ENCODE measurements at regions of chr1 and their contacts with region 1.

Region 1: GRCh38 chr1:179706339-179706941 is 36.7 kb upstream of the FAM163A start:
- DNase-seq: peak; percentile 68
- ATAC-seq: no peak
- H3K4me3 Mint-ChIP-seq: no peak overlapping the region
- H3K27ac Mint-ChIP-seq: no peak overlapping the region
- H3K4me1 Mint-ChIP-seq: peaks cover 6% of the 10 kb centered on the region
- H3K27me3 Mint-ChIP-seq: no peaks in the 10 kb centered on the region
- CTCF ChIP-seq: peak; percentile 80

Region 2: GRCh38 chr1:179719272-179719671 is 12.8 kb after region 1 on chr1:
- CTCF ChIA-PET with region 1: interaction called, 30 read pairs
- POLR2A ChIA-PET with region 1: no interaction called
- intact Hi-C with region 1: no loop called
- DNase-seq: no peak
- ATAC-seq: no peak
- H3K4me3 Mint-ChIP-seq: no peak overlapping the region
- H3K27ac Mint-ChIP-seq: no peak overlapping the region
- H3K4me1 Mint-ChIP-seq: no peaks in the 10 kb centered on the region
- H3K27me3 Mint-ChIP-seq: no peaks in the 10 kb centered on the region
- CTCF ChIP-seq: no peak

Region 3: DNA sequence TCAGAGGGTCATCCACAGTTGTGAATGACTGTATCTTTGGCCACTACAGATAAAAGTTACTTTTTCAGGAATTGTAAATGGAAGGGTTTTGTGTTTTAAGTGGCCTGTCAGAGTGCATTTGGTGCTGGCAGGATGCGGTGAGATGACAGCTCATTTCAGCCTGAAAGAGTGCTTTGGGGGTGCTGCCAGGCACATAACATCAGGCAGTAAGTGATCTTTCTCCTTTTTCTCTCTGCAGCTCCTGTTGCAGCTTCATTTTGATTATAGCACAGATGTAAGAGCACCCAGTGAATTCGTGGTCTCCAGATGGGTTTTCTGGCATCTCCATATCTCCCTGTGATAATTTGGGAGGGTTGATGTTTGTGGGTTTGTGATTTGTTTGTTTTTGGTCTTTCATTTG is 21.8 kb after region 1 on chr1:
- CTCF ChIA-PET with region 1: interaction called, 30 read pairs
- POLR2A ChIA-PET with region 1: no interaction called
- intact Hi-C with region 1: no loop called
- DNase-seq: no peak
- ATAC-seq: no peak
- H3K4me3 Mint-ChIP-seq: no peak overlapping the region
- H3K27ac Mint-ChIP-seq: no peak overlapping the region
- H3K4me1 Mint-ChIP-seq: no peaks in the 10 kb centered on the region
- H3K27me3 Mint-ChIP-seq: peaks cover 9% of the 10 kb centered on the region
- CTCF ChIP-seq: no peak

Region 4: GRCh38 chr1:179761296-179761695 is 54.9 kb after region 1 on chr1:
- CTCF ChIA-PET with region 1: interaction called, 17 read pairs
- POLR2A ChIA-PET with region 1: no interaction called
- intact Hi-C with region 1: no loop called
- DNase-seq: no peak
- ATAC-seq: no peak
- H3K4me3 Mint-ChIP-seq: no peak overlapping the region
- H3K27ac Mint-ChIP-seq: no peak overlapping the region
- H3K4me1 Mint-ChIP-seq: no peaks in the 10 kb centered on the region
- H3K27me3 Mint-ChIP-seq: peaks cover 5% of the 10 kb centered on the region
- CTCF ChIP-seq: no peak

Region 5: DNA sequence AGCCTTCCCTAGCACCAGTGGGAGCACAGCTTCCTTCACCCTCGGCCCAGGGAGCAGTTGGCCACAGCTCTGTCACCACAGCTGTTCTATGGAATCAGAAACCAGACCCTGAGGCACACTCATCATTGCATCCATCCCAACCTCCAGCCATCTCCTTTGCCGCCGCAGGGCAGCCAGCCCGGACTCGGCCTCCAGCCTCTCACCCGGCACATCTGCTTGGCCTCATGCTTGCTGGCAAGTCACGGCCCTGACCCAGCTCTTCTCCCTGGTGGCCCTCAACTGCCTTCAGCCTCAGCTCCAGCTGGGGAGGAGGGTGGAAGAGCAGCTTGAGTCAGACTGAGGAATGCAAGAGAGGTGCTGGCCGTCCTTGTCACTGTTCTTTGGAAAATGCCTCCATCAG is 111.3 kb after region 1 on chr1:
- CTCF ChIA-PET with region 1: interaction called, 634 read pairs
- POLR2A ChIA-PET with region 1: interaction called, 7 read pairs
- intact Hi-C with region 1: loop called (anchors 1 kb)
- DNase-seq: no peak
- ATAC-seq: no peak
- H3K4me3 Mint-ChIP-seq: no peak overlapping the region
- H3K27ac Mint-ChIP-seq: no peak overlapping the region
- H3K4me1 Mint-ChIP-seq: peaks cover 9% of the 10 kb centered on the region
- H3K27me3 Mint-ChIP-seq: no peaks in the 10 kb centered on the region
- CTCF ChIP-seq: no peak